ENCODE measurements at regions of chr3 and their contacts with region 1.

Region 1: DNA sequence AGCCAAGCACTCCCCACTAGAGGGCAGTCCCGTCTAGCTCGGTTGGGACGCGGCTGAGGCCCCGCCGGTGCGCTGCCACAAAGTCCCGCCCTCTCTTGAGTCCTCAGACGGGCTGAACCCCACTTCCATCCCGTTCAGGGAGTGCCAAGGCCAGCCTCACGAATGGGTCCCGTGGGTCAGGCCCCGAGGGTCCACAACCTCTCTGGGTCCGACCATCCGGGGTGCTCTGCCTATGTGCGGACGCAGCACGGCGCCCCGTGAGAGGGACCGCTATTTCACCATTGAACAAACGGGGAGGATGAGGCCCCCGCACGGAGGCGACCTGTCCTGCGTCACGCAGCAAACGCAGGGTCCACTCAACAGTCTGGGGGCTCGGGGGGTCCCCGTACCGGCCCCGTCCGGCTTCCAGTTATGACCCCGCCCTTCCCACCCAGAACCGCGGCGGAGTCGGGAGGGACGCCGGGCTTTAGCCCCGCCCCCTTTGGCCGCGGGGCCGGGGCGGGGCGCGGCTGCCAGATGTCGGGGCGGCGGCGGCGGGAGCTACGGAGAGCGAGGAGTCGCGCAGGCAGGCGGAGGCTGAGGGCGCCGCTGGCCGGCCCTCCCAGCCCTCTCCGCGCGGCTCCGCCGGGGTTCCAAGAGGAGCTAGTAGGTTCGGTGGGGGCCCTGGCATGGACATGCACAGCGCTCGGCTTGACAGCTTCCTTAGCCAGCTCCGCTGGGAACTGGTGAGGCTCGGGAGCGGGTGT is at the start of gene INKA1:
- DNase-seq: peak; percentile 89
- H3K4me3 Mint-ChIP-seq: peak within 1 kb of the TSS; percentile 83
- H3K27ac Mint-ChIP-seq: peak within 1 kb of the TSS; percentile 79
- H3K4me1 Mint-ChIP-seq: peaks cover 39% of the 10 kb centered on the region
- H3K27me3 Mint-ChIP-seq: peaks cover 16% of the 10 kb centered on the region
- total RNA-seq, gene INKA1: 0.20 to 0.48 TPM

Region 2: DNA sequence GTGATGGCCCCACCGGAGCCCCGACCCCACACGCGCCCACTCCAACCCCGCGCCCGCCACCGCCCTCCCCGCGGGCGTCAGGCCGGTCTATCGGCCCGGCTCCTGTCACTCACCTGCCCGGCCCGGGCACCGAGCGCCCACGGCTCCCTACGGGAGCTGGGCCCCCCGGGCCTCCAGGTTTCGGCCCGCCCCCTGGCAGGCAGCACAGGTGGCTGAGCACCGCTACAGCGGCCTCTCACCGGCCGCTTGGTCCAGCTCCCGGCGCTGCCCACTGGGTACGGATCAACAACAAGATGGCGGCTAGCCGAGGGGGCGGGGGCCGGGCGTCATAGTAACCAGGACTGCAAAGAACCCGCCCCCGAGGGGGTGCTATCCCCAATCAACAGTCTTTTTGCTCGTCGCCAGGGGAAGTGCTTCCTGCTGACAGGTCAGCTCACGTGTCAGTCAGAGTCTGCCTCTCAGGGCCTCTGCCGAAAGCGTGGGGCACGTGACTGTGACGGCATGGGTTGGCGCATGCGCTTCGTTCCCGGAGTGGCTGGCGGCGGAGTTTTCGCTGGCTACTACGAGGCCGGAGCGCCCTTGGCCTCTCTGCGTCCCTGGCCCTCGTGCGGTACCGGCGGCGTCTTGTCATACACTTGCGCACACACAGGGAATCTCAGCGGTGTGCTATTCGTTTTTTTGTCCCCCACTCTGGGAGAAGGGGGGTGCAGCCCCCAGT is 16.5 kb before region 1 on chr3 and contains the start of gene IP6K1:
- CTCF ChIA-PET with region 1: interaction called, 22 read pairs
- POLR2A ChIA-PET with region 1: interaction called, 17 read pairs
- DNase-seq: peak; percentile 100
- H3K4me3 Mint-ChIP-seq: peak within 1 kb of the TSS; percentile 85
- H3K27ac Mint-ChIP-seq: peak within 1 kb of the TSS; percentile 92
- H3K4me1 Mint-ChIP-seq: peaks cover 34% of the 10 kb centered on the region
- H3K27me3 Mint-ChIP-seq: peaks cover 3% of the 10 kb centered on the region
- total RNA-seq, gene IP6K1: 38.8 to 39.2 TPM

Region 3: GRCh38 chr3:49813497-49814174 is 10.7 kb after region 1 on chr3 and contains the start of gene UBA7:
- CTCF ChIA-PET with region 1: interaction called, 43 read pairs
- POLR2A ChIA-PET with region 1: interaction called, 54 read pairs
- DNase-seq: peak; percentile 51
- H3K4me3 Mint-ChIP-seq: peak within 1 kb of the TSS; percentile 96
- H3K27ac Mint-ChIP-seq: peak within 1 kb of the TSS; percentile 93
- H3K4me1 Mint-ChIP-seq: peaks cover 31% of the 10 kb centered on the region
- H3K27me3 Mint-ChIP-seq: no peaks in the 10 kb centered on the region
- total RNA-seq, gene UBA7: 179 to 182 TPM

Region 4: DNA sequence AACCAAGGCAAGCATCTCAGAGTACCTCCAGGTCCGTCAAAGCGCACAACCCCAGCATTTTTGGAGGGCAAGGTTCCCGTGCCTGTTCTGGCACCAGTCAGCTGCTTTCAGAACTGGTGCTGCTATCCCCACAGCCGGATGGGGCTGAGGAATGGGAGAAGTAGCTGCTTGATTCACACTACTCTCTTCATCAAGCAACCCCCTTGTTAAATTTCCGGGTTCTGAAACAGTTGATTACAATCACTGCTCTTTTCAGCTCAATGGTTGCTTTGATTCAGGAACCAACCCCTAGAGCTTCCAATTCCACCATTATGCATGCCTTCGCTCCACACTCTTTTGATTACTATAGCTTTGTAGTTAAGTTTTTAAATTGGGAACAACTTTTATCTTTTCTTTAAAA is 23.1 kb after region 1 on chr3:
- CTCF ChIA-PET with region 1: interaction called, 12 read pairs
- POLR2A ChIA-PET with region 1: interaction called, 12 read pairs
- DNase-seq: no peak
- H3K4me3 Mint-ChIP-seq: no peak overlapping the region
- H3K27ac Mint-ChIP-seq: no peak overlapping the region
- H3K4me1 Mint-ChIP-seq: no peaks in the 10 kb centered on the region
- H3K27me3 Mint-ChIP-seq: no peaks in the 10 kb centered on the region

Region 5: GRCh38 chr3:49839193-49839809 is 36.4 kb after region 1 on chr3:
- CTCF ChIA-PET with region 1: interaction called, 104 read pairs
- POLR2A ChIA-PET with region 1: interaction called, 24 read pairs
- DNase-seq: peak; percentile 81
- H3K4me3 Mint-ChIP-seq: no peak overlapping the region
- H3K27ac Mint-ChIP-seq: no peak overlapping the region
- H3K4me1 Mint-ChIP-seq: peaks cover 1% of the 10 kb centered on the region
- H3K27me3 Mint-ChIP-seq: no peaks in the 10 kb centered on the region

Region 6: DNA sequence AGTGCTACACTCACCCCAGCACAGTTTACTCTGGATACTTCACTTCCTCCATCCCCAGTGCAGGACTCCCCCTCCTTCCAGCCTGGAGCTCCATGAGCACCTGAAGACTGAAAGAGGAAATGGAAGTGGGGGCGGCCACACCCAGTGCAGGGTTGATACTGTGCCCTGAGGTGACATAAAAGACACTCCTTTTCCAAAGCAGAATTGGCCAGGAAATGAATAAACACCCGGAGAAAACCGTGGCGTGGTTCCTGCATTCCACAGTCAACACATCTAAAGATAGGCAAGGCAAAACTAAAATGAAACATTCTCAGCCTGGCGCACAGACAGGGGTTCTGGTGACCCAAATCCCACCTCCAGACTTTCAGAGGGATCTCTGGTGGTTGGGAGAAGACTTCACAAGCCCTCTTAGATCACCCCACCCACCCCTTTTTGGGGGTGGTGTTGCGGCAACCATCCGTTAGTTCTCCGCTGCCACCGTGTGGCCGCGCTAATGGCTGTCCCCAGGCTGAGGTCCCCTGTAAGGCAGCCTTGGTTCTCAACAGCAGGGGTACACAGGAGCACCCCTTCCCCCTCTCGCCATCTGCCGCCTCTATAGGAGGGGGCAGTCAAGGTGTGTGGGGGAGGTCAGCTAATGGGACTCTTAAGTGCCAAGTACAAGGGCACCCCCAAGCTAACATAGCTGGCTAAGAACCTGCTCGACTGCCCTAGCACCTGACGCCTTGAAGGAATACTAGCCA is 103.3 kb after region 1 on chr3:
- CTCF ChIA-PET with region 1: interaction called, 14 read pairs
- POLR2A ChIA-PET with region 1: interaction called, 4 read pairs
- DNase-seq: peak; percentile 61
- H3K4me3 Mint-ChIP-seq: peak overlapping the region; percentile 56
- H3K27ac Mint-ChIP-seq: peak overlapping the region; percentile 82
- H3K4me1 Mint-ChIP-seq: peaks cover 31% of the 10 kb centered on the region
- H3K27me3 Mint-ChIP-seq: no peaks in the 10 kb centered on the region